ENCODE measurements at regions of chr14 and their contacts with region 1.

Region 1: GRCh38 chr14:60248697-60249318 is at the start of gene PPM1A:
- DNase-seq: peak; percentile 97 to 99
- ATAC-seq: peak; percentile 98
- H3K4me3 ChIP-seq: peak within 1 kb of the TSS; percentile 99 to 100
- H3K27ac ChIP-seq: peak within 1 kb of the TSS; percentile 99
- H3K4me1 ChIP-seq: peaks cover 4 to 5% of the 10 kb centered on the region in 2 donors
- H3K27me3 ChIP-seq: no peaks in the 10 kb centered on the region
- total RNA-seq, gene PPM1A: 61.8 to 63.7 TPM

Region 2: GRCh38 chr14:60091550-60092530 is 157.0 kb before region 1 on chr14 and contains the start of gene PCNX4:
- intact Hi-C with region 1: loop called in 1 of 2 experiments (anchors 2 kb)
- DNase-seq: peak; percentile 97 to 98
- ATAC-seq: peak; percentile 100
- H3K4me3 ChIP-seq: peak within 1 kb of the TSS; percentile 46 to 92
- H3K27ac ChIP-seq: peak within 1 kb of the TSS; percentile 6 to 49
- H3K4me1 ChIP-seq: no peaks in the 10 kb centered on the region
- H3K27me3 ChIP-seq: no peaks in the 10 kb centered on the region
- total RNA-seq, gene PCNX4: 41.2 to 49.7 TPM

Region 3: GRCh38 chr14:60311417-60311816 is 62.6 kb after region 1 on chr14:
- intact Hi-C with region 1: no loop called
- DNase-seq: no peak
- ATAC-seq: no peak
- H3K4me3 ChIP-seq: no peak overlapping the region
- H3K27ac ChIP-seq: no peak overlapping the region
- H3K4me1 ChIP-seq: no peaks in the 10 kb centered on the region
- H3K27me3 ChIP-seq: no peaks in the 10 kb centered on the region

Region 4: GRCh38 chr14:60980811-60981632 is 732.2 kb after region 1 on chr14 and contains the starts of genes SLC38A6 and TRMT5:
- intact Hi-C with region 1: loop called in 1 of 2 experiments (anchors 10 kb)
- DNase-seq: peak; percentile 95 to 98
- ATAC-seq: peak; percentile 97
- H3K4me3 ChIP-seq: peak within 1 kb of the TSS; percentile 70 to 75
- H3K27ac ChIP-seq: peak within 1 kb of the TSS in 1 of 2 donors; percentile 72
- H3K4me1 ChIP-seq: peaks cover 1 to 5% of the 10 kb centered on the region in 2 donors
- H3K27me3 ChIP-seq: no peaks in the 10 kb centered on the region
- total RNA-seq, gene SLC38A6: 17.2 to 41.3 TPM
- total RNA-seq, gene TRMT5: 8.8 to 12.3 TPM